ENCODE measurements at regions of chr6 and their contacts with region 1.

Region 1: GRCh38 chr6:102023977-102024657 is 630.6 kb downstream of the GRIK2 start:
- DNase-seq: no peak
- ATAC-seq: peak in 1 of 8 donors; percentile 68
- H3K4me3 ChIP-seq: no peak overlapping the region
- H3K27ac ChIP-seq: no peak overlapping the region
- H3K4me1 ChIP-seq: no peaks in the 10 kb centered on the region
- H3K27me3 ChIP-seq: no peaks in the 10 kb centered on the region
- CTCF ChIP-seq: no peak

Region 2: DNA sequence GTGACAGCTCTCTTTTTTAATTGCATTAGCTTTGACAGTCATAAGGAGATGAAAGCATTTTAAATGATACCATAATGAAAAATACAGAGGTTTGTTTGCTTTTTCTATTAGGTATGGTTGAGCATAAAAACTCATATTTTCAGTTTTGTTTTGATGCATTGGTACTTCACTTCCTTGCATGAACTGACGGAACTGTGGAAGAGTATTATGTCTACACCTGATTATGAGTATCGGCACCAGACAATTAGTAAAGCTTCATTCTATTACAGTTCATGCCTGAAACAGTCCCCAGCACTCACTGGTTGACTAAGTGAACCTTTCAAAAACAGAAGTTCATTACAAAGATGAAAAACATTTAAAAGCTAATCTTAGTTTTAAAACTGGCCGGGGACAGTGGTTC is 37.6 kb before region 1 on chr6:
- intact Hi-C with region 1: loop called in 1 of 10 experiments (anchors 2 kb)
- DNase-seq: no peak
- ATAC-seq: no peak
- H3K4me3 ChIP-seq: no peak overlapping the region
- H3K27ac ChIP-seq: no peak overlapping the region
- H3K4me1 ChIP-seq: no peaks in the 10 kb centered on the region
- H3K27me3 ChIP-seq: no peaks in the 10 kb centered on the region
- CTCF ChIP-seq: no peak